Posterior vena cava (tissue), 2 donors: ENCODE measurements at regions of chr10 and their contacts with region 1.

Region 1: GRCh38 chr10:2927958-2928840 is 139.1 kb upstream of the PFKP start:
- DNase-seq: no peak

Region 2: DNA sequence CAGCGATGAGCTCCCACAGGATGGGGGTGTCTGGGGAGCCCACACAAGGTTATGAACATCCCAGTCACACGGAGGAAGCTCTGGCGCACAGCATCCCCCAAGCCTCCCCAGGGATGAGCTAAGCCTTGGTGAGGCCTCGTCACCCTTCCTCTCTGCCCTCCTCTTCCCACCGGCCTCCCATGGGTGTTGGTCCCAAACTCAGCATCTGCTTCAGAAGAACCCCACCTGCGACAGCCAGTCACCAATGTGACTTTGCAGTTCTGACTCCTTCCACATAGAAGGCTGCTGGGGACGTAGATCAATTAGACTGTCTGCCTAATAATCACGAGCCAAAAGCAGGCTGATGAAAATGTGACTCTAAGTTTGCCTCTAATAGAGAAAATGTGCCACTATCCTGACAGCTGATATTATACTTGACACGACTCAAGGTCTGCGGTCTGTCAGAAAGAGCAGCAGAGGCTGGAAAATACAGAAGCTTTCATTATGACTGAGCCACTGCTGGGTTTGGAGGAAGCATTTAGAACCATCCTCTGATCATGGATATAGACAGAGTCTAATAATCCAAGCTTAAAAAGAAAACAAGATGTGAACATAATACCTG is 23.1 kb after region 1 on chr10:
- intact Hi-C with region 1: no loop called
- DNase-seq: no peak

Region 3: GRCh38 chr10:3043512-3044368 is 115.5 kb after region 1 on chr10:
- intact Hi-C with region 1: loop called (anchors 5 to 10 kb)
- DNase-seq: no peak